Natural killer cell (primary cell): ENCODE measurements at regions of chr16 and their contacts with region 1.

Region 1: GRCh38 chr16:53054670-53055485 is at the start of gene CHD9:
- DNase-seq: peak; percentile 75 to 90
- ATAC-seq: peak; percentile 94 to 97 (median 95)
- H3K4me3 ChIP-seq: peak within 1 kb of the TSS; percentile 70
- H3K4me3 Mint-ChIP-seq: peak within 1 kb of the TSS; percentile 92
- H3K27ac ChIP-seq: peak within 1 kb of the TSS; percentile 39
- H3K27ac Mint-ChIP-seq: peak within 1 kb of the TSS; percentile 45 to 92
- H3K4me1 ChIP-seq: peaks cover 46% of the 10 kb centered on the region
- H3K4me1 Mint-ChIP-seq: peaks cover 33% of the 10 kb centered on the region in 2 donors
- H3K27me3 ChIP-seq: no peaks in the 10 kb centered on the region
- H3K27me3 Mint-ChIP-seq: no peaks in the 10 kb centered on the region
- CTCF ChIP-seq: peak; percentile 99
- total RNA-seq, gene CHD9: 81.4 to 85.2 (median 81.9) TPM

Region 2: DNA sequence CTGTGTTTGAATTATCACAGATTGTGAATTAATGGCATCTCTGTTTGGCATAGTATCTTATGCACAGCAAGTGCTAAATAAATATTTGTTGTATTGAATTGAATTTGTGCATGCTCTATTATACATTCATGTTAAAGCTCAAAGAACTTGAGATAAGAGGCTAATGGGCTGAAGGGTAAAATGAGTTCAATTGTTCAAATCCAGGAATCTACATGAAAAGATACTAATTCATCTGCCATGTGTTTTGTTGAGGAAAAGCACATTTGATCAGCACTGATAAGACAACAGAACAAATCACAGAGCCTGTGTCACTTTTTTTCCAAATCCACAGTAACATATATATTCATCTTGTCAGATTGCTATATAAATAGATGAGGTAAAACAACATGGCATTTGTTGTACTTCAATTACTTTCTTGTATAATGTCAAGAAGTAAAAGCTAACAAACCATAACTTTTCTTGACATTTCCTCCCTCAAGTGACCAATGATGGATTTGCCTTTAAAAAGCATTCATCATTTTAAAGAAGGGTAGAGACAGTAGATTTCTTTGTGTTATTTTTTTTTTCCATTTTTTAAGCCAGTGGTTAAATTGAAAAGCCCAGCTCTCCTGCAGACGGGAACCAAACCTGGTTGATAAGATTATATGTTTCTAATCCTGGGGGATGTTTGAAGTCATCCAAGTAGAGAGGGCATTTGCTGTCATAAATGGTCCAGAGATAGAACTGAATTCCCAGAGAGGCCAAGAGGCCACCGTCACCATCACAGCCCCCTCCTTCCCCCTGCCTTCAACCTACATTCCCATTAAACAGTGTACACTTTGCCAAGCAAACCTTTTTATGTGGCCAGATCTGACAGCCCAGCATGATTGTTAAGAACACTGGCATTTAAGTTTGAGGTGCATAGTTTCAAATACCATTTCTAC is 125.1 kb before region 1 on chr16:
- intact Hi-C with region 1: no loop called
- DNase-seq: no peak
- ATAC-seq: no peak
- H3K4me3 ChIP-seq: no peak overlapping the region
- H3K4me3 Mint-ChIP-seq: no peak overlapping the region
- H3K27ac ChIP-seq: no peak overlapping the region
- H3K27ac Mint-ChIP-seq: no peak overlapping the region
- H3K4me1 ChIP-seq: no peaks in the 10 kb centered on the region
- H3K4me1 Mint-ChIP-seq: no peaks in the 10 kb centered on the region
- H3K27me3 ChIP-seq: no peaks in the 10 kb centered on the region
- H3K27me3 Mint-ChIP-seq: peaks cover 0 to 10% of the 10 kb centered on the region in 2 donors
- CTCF ChIP-seq: no peak

Region 3: GRCh38 chr16:53068423-53068833 is 13.6 kb after region 1 on chr16:
- intact Hi-C with region 1: loop called (anchors 1 kb)
- DNase-seq: peak in 1 of 2 donors; percentile 43
- ATAC-seq: peak; percentile 60 to 79 (median 61)
- H3K4me3 ChIP-seq: no peak overlapping the region
- H3K4me3 Mint-ChIP-seq: peak overlapping the region; percentile 80
- H3K27ac ChIP-seq: peak overlapping the region; percentile 44
- H3K27ac Mint-ChIP-seq: peak overlapping the region; percentile 39 to 85
- H3K4me1 ChIP-seq: peaks cover 68% of the 10 kb centered on the region
- H3K4me1 Mint-ChIP-seq: peaks cover 65 to 86% of the 10 kb centered on the region in 2 donors
- H3K27me3 ChIP-seq: no peaks in the 10 kb centered on the region
- H3K27me3 Mint-ChIP-seq: no peaks in the 10 kb centered on the region
- CTCF ChIP-seq: no peak

Region 4: DNA sequence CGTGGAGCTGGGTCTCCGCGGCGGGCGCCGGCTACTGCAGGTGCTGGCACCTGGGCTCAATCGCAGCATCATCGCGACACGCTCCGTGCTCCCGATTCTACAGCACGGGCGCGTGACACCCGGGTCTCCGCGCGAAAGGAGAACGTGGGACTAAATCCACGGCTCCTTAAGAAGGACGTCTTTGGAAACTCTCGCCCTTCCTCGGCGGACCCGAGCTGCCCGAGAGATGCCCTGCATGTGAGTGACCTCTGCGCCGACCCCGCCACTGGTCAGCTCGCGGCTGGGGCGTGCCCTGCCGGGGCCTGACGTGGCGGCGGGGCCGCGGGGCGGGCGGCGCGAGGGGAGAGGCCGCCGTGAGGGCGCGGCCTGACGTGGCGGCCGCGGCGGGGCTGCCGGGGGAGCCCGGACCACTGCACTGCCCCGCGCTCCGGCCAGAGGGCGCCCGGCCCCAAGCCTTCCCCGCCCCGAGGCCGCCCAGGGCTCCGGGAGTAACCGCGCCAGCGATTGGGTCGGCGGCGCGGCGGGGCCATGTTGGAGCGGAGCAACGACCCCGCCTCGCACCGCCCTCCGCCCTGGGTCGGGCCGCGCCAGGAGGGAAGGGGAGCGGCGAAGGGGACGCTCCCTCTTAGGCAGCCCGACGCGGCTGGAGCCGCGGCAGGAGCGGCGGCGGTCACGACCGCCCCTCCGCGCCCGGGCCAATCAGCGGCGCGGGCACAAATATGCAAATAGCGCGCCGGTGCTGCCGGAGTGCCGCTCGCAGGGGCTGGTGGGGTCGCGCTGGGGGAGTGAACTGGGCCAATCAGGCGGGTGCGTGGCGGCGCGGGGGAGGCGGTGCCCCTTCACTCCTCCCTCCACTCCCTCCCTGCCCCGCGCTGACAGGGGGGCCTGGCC is 75.5 kb after region 1 on chr16:
- intact Hi-C with region 1: loop called (anchors 2 kb)
- DNase-seq: peak; percentile 94 to 95
- ATAC-seq: peak; percentile 86 to 96 (median 90)
- H3K4me3 ChIP-seq: peak overlapping the region; percentile 97
- H3K4me3 Mint-ChIP-seq: peak overlapping the region; percentile 87
- H3K27ac ChIP-seq: peak overlapping the region; percentile 92
- H3K27ac Mint-ChIP-seq: peak overlapping the region; percentile 87 to 91
- H3K4me1 ChIP-seq: peaks cover 12% of the 10 kb centered on the region
- H3K4me1 Mint-ChIP-seq: peaks cover 9 to 18% of the 10 kb centered on the region in 2 donors
- H3K27me3 ChIP-seq: no peaks in the 10 kb centered on the region
- H3K27me3 Mint-ChIP-seq: no peaks in the 10 kb centered on the region
- CTCF ChIP-seq: peak; percentile 50

Region 5: GRCh38 chr16:53207810-53208752 is 153.2 kb after region 1 on chr16:
- intact Hi-C with region 1: loop called (anchors 1 kb)
- DNase-seq: peak; percentile 26 to 59
- ATAC-seq: peak; percentile 82 to 84 (median 83)
- H3K4me3 ChIP-seq: peak overlapping the region; percentile 35
- H3K4me3 Mint-ChIP-seq: peak overlapping the region; percentile 90
- H3K27ac ChIP-seq: peak overlapping the region; percentile 77
- H3K27ac Mint-ChIP-seq: peak overlapping the region; percentile 87 to 99
- H3K4me1 ChIP-seq: peaks cover 8% of the 10 kb centered on the region
- H3K4me1 Mint-ChIP-seq: peaks cover 33 to 40% of the 10 kb centered on the region in 2 donors
- H3K27me3 ChIP-seq: no peaks in the 10 kb centered on the region
- H3K27me3 Mint-ChIP-seq: no peaks in the 10 kb centered on the region
- CTCF ChIP-seq: peak; percentile 55

Region 6: GRCh38 chr16:53282975-53283946 is 228.4 kb after region 1 on chr16:
- intact Hi-C with region 1: loop called (anchors 2 kb)
- DNase-seq: peak in 1 of 2 donors; percentile 53
- ATAC-seq: no peak
- H3K4me3 ChIP-seq: no peak overlapping the region
- H3K4me3 Mint-ChIP-seq: no peak overlapping the region
- H3K27ac ChIP-seq: no peak overlapping the region
- H3K27ac Mint-ChIP-seq: no peak overlapping the region
- H3K4me1 ChIP-seq: no peaks in the 10 kb centered on the region
- H3K4me1 Mint-ChIP-seq: no peaks in the 10 kb centered on the region
- H3K27me3 ChIP-seq: no peaks in the 10 kb centered on the region
- H3K27me3 Mint-ChIP-seq: no peaks in the 10 kb centered on the region
- CTCF ChIP-seq: peak; percentile 18